Activated T-helper 1 cell treated with anti-CD3 and anti-CD28 coated beads, Interleukin-12 subunit alpha, Interleukin-12 subunit beta, Interleukin-2, Interleukin-4 antibody, amounts not matched to agents 30 ng/mL and 10 ng/mL and 1 ng/mL, durations not matched to agents 14 hours and 24 hours and 36 hours (primary cell): ENCODE measurements at regions of chr20 and their contacts with region 1.

Region 1: DNA sequence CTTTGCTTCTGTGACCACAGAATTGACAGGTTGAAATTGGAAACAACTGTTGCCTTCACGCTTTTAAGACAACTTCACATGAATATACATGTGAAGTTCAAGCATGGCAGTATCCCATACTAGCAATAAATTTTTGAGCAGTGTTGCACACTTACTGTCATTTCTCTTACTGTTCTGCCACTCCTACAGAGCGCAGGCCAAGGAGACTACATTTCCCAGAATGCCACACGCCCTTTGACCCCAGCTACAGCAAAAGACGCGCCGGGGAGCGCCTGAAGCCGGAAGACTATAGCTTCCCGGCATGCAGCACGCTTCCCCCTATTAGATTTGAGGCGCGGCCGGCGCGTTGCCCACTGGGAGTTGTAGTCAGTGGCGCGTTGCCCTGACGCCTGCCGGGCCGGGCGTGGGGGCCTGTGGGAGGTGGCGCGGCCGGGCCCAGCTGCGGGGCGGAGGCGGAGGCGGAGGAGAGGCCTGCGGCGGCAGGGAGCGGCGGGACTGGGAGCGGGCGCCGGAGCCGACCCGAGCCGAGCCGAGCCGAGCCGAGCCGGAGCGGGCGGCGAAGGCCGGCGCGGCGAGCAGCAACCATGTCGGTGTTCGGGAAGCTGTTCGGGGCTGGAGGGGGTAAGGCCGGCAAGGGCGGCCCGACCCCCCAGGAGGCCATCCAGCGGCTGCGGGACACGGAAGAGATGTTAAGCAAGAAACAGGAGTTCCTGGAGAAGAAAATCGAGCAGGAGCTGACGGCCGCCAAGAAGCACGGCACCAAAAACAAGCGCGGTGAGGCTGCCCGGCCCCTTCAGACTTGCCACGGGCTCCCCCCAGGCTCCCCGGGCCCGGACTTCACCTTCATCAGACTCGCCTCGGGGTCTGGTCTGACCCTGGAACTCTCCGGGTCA is at the start of gene CHMP4B:
- DNase-seq: peak; percentile 99
- H3K4me3 Mint-ChIP-seq: peak within 1 kb of the TSS; percentile 94
- H3K27ac Mint-ChIP-seq: peak within 1 kb of the TSS; percentile 97
- H3K4me1 Mint-ChIP-seq: peaks cover 47% of the 10 kb centered on the region
- H3K27me3 Mint-ChIP-seq: no peaks in the 10 kb centered on the region
- total RNA-seq, gene CHMP4B: 94.5 and 96.4 TPM in 2 replicates

Region 2: DNA sequence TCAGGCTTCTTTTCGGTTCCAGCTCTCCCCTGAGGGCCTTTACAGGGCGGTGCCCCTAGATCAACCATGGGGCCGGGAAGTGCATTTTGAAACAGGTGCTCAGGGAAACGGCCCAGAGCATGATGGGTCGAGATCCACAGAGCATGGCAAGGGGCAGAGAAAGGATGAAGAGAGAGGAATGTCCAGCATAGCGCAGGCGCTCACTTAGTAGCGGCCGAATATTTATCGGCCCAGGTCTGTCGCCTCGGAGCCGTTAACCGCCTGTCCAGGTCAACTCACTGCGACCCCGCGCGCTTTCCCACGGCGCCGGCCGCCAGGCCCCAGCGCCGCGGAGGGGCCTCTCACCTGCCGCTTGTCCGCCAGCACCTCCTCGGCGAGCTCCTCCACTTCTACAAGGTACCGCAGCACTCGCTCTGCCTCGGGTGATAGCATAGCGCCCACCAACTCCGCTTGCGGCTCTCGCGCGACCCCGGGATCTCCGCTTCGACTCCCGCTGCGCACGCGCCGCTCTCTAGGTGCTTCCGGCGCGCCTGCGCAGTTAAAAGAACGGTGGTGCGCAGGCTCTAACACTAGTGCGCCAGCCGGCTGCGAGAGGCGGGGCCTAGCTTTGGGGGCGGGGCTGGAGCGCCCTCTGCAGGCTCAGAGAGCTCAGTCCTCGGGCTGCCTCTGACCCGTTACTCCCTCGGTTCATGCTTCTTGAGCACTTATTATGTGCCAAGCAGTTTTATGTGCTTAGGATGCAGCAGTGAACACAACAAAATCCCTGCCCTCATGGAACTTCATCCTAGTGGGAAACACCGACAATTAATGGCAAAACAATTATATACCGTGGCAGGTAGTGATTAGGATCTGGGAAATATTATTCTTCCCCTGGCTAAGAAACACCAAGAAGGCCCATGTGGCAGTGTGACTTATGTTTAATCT is 1859.3 kb before region 1 on chr20 and contains the start of gene PDRG1:
- intact Hi-C with region 1: loop called (anchors 5 kb)
- DNase-seq: peak; percentile 96
- H3K4me3 Mint-ChIP-seq: peak within 1 kb of the TSS; percentile 97
- H3K27ac Mint-ChIP-seq: peak within 1 kb of the TSS; percentile 95
- H3K4me1 Mint-ChIP-seq: peaks cover 28% of the 10 kb centered on the region
- H3K27me3 Mint-ChIP-seq: peaks cover 8% of the 10 kb centered on the region
- total RNA-seq, gene PDRG1: 20.0 and 20.5 TPM in 2 replicates

Region 3: GRCh38 chr20:33489495-33490022 is 321.6 kb before region 1 on chr20:
- intact Hi-C with region 1: loop called (anchors 1 kb)
- DNase-seq: peak; percentile 99
- H3K4me3 Mint-ChIP-seq: peak overlapping the region; percentile 88
- H3K27ac Mint-ChIP-seq: peak overlapping the region; percentile 85
- H3K4me1 Mint-ChIP-seq: peaks cover 9% of the 10 kb centered on the region
- H3K27me3 Mint-ChIP-seq: no peaks in the 10 kb centered on the region

Region 4: GRCh38 chr20:33686100-33686983 is 124.8 kb before region 1 on chr20 and contains the start of gene E2F1:
- intact Hi-C with region 1: loop called (anchors 5 kb)
- DNase-seq: peak; percentile 97
- H3K4me3 Mint-ChIP-seq: peak within 1 kb of the TSS; percentile 92
- H3K27ac Mint-ChIP-seq: peak within 1 kb of the TSS; percentile 89
- H3K4me1 Mint-ChIP-seq: peaks cover 71% of the 10 kb centered on the region
- H3K27me3 Mint-ChIP-seq: no peaks in the 10 kb centered on the region
- total RNA-seq, gene E2F1: 77.5 and 80.6 TPM in 2 replicates

Region 5: DNA sequence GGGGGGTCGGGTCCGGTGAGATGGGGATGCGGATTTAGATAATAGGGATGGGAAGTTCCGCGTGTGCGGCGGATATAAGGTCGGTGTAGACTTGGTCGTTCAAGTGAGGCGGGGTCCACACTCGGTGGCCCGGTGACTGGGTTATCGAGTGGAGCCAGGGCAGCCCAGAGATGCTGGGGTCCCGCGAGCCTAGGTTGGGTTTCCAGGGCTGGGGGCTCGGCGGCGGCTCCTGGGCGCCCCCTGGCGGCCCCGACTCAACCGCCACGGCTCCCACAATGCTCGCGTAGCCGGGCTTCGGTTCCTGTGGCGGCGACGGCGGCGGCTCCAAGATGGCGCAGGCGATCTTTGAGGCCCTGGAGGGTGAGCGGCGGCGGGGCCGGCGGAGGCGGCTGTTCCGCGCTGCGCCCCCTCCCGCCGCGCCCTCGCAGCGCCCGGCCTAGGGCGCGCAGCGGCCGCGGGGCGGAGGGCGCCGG is 79.4 kb before region 1 on chr20 and contains the start of gene ZNF341:
- intact Hi-C with region 1: loop called (anchors 1 kb)
- DNase-seq: peak; percentile 87
- H3K4me3 Mint-ChIP-seq: peak within 1 kb of the TSS; percentile 89
- H3K27ac Mint-ChIP-seq: peak within 1 kb of the TSS; percentile 97
- H3K4me1 Mint-ChIP-seq: peaks cover 27% of the 10 kb centered on the region
- H3K27me3 Mint-ChIP-seq: no peaks in the 10 kb centered on the region
- total RNA-seq, gene ZNF341: 6.7 and 6.8 TPM in 2 replicates

Region 6: GRCh38 chr20:33954504-33954903 is 143.4 kb after region 1 on chr20:
- intact Hi-C with region 1: no loop called
- DNase-seq: no peak
- H3K4me3 Mint-ChIP-seq: no peak overlapping the region
- H3K27ac Mint-ChIP-seq: no peak overlapping the region
- H3K4me1 Mint-ChIP-seq: no peaks in the 10 kb centered on the region
- H3K27me3 Mint-ChIP-seq: peaks cover 11% of the 10 kb centered on the region

Region 7: DNA sequence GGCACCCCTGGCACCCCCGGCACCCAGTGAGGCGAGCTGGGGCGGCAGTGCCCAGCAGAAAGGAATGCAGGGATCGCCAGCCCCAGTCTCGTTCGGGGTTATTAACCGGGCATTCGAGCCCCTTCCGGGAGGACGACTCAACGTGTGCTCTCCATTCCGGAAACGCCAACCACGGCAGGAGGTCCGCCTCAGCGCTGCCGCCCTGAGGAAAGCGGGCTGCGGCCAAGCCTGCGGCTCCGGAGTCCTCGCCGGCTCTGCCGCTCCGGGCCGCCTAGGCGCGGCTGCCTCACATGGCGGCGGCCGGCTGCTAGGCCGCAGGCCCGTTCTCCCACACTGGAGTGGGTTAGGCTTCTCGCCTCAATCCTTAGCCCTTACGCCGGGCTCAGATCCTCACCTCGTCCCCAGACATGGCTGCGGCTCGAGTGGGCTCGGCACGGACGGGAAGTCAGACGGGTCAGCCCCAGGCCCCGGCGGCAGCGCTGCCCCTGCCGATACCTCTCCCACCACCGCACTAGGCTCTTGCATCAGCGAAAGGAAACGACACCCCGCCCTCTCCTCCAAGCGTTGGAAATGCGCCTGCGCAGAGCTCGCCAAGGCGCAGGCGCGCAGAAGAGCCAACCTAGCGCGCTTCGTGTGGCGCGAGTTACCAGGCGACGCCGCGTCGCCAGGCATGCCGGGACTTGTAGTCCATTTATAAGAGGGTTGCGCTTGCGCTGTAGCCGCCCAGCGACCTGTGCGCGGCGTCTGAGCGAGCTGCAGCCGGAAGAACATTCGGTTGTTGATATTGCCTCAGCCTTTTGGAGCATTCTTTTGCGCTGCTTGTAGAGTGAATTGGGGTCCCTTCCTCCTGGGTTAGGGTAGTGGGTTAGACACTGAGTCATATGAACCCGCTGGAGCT is 300.8 kb after region 1 on chr20 and contains the start of gene EIF2S2:
- intact Hi-C with region 1: loop called (anchors 1 kb)
- DNase-seq: peak; percentile 96
- H3K4me3 Mint-ChIP-seq: peak within 1 kb of the TSS; percentile 88
- H3K27ac Mint-ChIP-seq: peak within 1 kb of the TSS; percentile 98
- H3K4me1 Mint-ChIP-seq: peaks cover 46% of the 10 kb centered on the region
- H3K27me3 Mint-ChIP-seq: peaks cover 1% of the 10 kb centered on the region
- total RNA-seq, gene EIF2S2: 99.8 and 105 TPM in 2 replicates